HEK293 (cell line): ENCODE measurements at regions of chr17 and their contacts with region 1.

Region 1: DNA sequence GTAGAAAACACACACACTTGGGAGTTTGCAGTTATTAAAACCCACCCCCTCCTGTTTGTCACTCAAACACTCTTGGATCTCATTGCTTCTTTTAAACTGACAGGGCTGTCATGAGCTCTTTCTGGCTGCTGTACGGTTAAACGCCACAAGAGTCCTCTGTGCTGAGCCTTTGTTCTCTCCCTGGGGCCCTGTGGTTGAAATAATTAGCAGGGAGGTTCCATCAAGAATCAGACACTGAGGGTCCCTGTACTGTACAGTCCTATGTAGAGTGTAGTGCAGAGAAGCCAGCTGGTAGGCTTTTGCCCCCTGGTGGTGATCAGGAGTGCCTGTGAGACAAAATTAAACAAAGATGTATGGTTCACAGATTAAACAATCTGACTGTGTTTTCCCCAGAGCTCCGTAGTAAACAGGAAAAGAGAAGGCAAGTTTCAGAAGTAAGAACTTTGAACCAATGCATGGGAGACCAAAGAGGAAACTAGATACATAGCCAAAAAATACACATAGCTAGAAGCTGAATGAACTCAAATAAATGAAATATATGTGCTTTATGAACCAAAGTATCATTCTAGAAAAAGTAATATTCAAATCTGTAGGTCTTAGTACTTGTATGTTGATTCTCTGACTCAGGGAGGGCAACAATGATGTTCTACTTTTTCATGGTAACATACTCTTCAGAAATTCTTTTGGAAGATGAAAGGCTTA is 1.4 kb upstream of the SSH2 start:
- H3K4me3 ChIP-seq: peak overlapping the region; percentile 96; the same call in 1 of the 2 replicates
- H3K27ac ChIP-seq: 0 out of 2 replicates have a peak overlapping the region, but pooled peaks have one; percentile 93
- H3K4me1 ChIP-seq: peaks cover 14% of the 10 kb centered on the region
- CTCF ChIP-seq: peak; percentile 83

Region 2: GRCh38 chr17:29579866-29580771 is 351.3 kb before region 1 on chr17:
- CTCF ChIA-PET with region 1: interaction called, 17 read pairs
- POLR2A ChIA-PET with region 1: no interaction called
- H3K4me3 ChIP-seq: no peak overlapping the region
- H3K27ac ChIP-seq: no peak overlapping the region
- H3K4me1 ChIP-seq: no peaks in the 10 kb centered on the region
- CTCF ChIP-seq: peak; percentile 97

Region 3: DNA sequence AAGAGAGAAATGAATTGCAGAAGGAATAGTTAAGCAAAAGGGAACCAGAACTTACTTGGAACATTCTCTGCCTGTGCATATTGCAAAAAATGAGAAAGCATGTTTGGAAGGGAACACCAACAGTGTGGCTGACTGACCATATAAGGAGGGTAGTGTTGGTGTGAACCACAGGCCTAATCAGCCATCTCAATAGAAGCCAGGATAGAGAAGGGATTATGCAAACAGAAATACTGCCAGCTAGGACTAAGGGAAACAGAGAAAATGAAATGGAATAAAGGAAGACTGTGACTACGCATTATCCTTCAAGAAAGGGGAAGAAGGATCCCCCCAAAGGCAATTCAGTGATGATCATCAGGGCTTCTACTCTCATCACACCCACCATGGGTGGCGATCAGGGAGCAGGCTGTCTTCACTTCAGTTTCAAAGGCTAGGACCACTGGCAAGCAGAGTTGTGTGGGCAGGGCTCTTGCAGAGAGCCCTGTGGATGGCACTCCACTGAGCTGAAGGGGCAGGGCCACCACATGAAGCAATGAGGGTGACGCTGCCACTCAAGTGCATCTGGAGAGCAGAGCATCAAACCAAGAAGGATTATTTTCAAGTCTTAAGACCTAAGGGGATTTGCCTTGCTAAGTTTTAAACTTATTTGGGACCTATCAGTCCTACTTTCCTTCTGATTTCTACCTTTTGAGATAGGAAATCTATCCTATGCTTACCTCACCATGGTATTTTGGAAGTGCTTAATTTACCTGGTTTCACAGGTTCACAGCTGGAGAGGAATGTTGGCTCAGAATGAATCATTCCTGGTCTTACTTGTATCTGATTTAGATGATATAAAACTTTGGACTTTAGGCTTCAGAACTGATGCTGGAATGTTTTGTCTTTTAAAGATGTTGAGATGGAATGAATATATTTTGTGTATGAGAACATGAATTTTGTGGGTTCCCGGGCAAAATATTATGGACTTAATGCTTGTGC is 141.9 kb before region 1 on chr17:
- CTCF ChIA-PET with region 1: interaction called, 11 read pairs
- POLR2A ChIA-PET with region 1: no interaction called
- H3K4me3 ChIP-seq: no peak overlapping the region
- H3K27ac ChIP-seq: no peak overlapping the region
- H3K4me1 ChIP-seq: peaks cover 8% of the 10 kb centered on the region
- CTCF ChIP-seq: no peak

Region 4: GRCh38 chr17:29828676-29829284 is 102.6 kb before region 1 on chr17:
- CTCF ChIA-PET with region 1: interaction called, 34 read pairs
- POLR2A ChIA-PET with region 1: interaction called, 3 read pairs
- H3K4me3 ChIP-seq: no peak overlapping the region
- H3K27ac ChIP-seq: no peak overlapping the region
- H3K4me1 ChIP-seq: peaks cover 24% of the 10 kb centered on the region
- CTCF ChIP-seq: no peak

Region 5: GRCh38 chr17:29873476-29873875 is 57.9 kb before region 1 on chr17:
- CTCF ChIA-PET with region 1: interaction called, 52 read pairs
- POLR2A ChIA-PET with region 1: interaction called, 8 read pairs
- H3K4me3 ChIP-seq: no peak overlapping the region
- H3K27ac ChIP-seq: no peak overlapping the region
- H3K4me1 ChIP-seq: 0 out of 2 replicates have a peak, but pooled peaks cover 7% of the 10 kb centered on the region
- CTCF ChIP-seq: no peak

Region 6: GRCh38 chr17:29918922-29919856 is 12.2 kb before region 1 on chr17:
- CTCF ChIA-PET with region 1: interaction called, 39 read pairs
- POLR2A ChIA-PET with region 1: interaction called, 11 read pairs
- H3K4me3 ChIP-seq: no peak overlapping the region
- H3K27ac ChIP-seq: no peak overlapping the region
- H3K4me1 ChIP-seq: peaks cover 11% of the 10 kb centered on the region
- CTCF ChIP-seq: no peak

Region 7: DNA sequence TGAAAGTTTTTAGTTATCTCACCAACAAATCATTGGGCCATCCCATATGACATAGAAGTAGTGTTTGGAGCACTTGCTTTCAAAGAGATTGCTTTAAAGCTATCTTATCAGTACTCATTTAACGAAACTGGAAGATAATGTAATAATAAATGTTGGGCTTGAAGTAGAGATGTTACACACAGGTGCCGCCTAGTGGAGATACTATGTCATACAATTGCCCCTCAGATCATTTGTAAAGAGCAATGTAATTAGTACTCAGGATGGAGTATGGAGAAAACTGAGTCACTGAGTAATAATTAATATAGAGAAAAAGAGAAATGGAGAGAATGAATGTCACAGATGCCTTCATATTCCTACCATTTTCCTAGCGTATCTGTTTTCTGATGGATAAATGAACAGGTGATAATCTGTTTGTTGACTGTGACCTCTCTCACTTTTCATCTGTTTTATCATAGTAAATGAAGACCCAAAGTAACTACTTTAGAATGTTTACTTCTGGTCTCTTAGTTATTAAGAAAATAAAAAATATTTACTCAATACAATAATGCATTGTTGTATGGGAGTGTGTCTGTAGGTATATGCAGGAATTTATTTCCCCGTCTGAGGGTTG is 90.4 kb after region 1 on chr17:
- CTCF ChIA-PET with region 1: interaction called, 38 read pairs
- POLR2A ChIA-PET with region 1: interaction called, 6 read pairs
- H3K4me3 ChIP-seq: no peak overlapping the region
- H3K27ac ChIP-seq: no peak overlapping the region
- H3K4me1 ChIP-seq: no peaks in the 10 kb centered on the region
- CTCF ChIP-seq: 0 out of 2 replicates have a peak, but pooled peaks have one; percentile 34